GM12878 (cell line): ENCODE measurements at regions of chr16 and their contacts with region 1.

Region 1: GRCh38 chr16:69435977-69436820 is 11.8 kb downstream of the CYB5B start:
- DNase-seq: no peak
- ATAC-seq: peak; percentile 34
- H3K4me3 ChIP-seq: no peak overlapping the region
- H3K27ac ChIP-seq: no peak overlapping the region
- H3K4me1 ChIP-seq: peaks cover 39% of the 10 kb centered on the region
- H3K27me3 ChIP-seq: no peaks in the 10 kb centered on the region
- CTCF ChIP-seq: no peak
- EP300 ChIP-seq: no peak
- POLR2A ChIP-seq: no peak
- RAD21 ChIP-seq: no peak

Region 2: GRCh38 chr16:69424053-69424934 is 11.9 kb before region 1 on chr16 and contains the start of gene CYB5B:
- CTCF ChIA-PET with region 1: interaction called, 7 read pairs
- POLR2A ChIA-PET with region 1: interaction called, 12 read pairs
- RAD21 ChIA-PET with region 1: interaction called, 9 read pairs
- SMC1A ChIA-PET with region 1: interaction called, 13 read pairs
- in situ Hi-C with region 1: no loop called
- intact Hi-C with region 1: no loop called
- DNase-seq: peak; percentile 98
- ATAC-seq: peak; percentile 98
- H3K4me3 ChIP-seq: peak within 1 kb of the TSS; percentile 77
- H3K27ac ChIP-seq: peak within 1 kb of the TSS; percentile 78
- H3K4me1 ChIP-seq: no peaks in the 10 kb centered on the region
- H3K27me3 ChIP-seq: no peaks in the 10 kb centered on the region
- CTCF ChIP-seq: no peak
- EP300 ChIP-seq: no peak
- POLR2A ChIP-seq: peak; percentile 97
- RAD21 ChIP-seq: no peak
- polyA plus RNA-seq, gene CYB5B: 170 to 182 TPM